H1 (cell line): ENCODE measurements at regions of chr2 and their contacts with region 1.

Region 1: DNA sequence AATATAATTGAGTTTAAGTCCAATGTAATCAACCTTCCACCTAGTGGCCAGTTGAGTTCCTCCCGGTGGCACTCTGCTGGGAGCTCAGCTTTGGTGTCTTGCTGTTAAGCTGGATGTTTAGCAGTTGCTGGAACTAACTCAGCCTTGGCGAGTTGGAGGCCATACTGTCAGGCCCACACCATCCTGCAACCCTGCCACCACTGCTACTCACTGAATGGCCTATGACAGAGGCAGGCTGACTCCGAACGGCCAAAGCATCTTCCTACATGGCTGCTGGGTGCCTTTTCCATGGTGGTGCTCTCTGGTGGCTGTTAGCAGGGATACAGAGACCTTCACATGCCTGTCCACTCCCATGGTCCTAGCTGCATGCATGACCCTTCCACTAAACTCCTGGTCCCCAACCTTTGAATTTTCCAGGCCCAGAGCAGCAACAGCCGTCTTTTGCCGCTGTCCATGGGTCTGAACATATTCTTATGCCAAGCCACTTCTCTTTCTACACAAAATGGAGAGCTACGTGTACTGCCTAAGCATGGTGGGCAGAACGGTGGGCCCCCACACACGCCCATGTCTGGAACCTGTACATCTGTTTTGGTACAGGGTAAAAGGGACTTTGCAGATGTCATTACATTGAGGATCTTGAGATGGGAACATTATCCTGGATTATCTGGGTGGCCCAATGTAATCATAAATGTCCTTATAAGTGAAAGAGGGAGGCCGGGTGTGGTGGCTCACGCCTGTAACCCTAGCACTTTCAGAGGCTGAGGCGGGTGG is 15.0 kb upstream of the TRAF3IP1 start:
- DNase-seq: no peak
- H3K4me3 ChIP-seq: no peak overlapping the region
- H3K27ac ChIP-seq: no peak overlapping the region
- H3K4me1 ChIP-seq: peaks cover 0 to 3% (median 0%) of the 10 kb centered on the region in 4 experiments; a peak in 1 of 7 replicates
- H3K27me3 ChIP-seq: 0 out of 7 replicates have a peak, but pooled peaks cover 0 to 3% (median 0%) of the 10 kb centered on the region in 4 experiments
- CTCF ChIP-seq: peak; percentile 18 to 60 (median 36)
- EP300 ChIP-seq: no peak
- POLR2A ChIP-seq: no peak
- RAD21 ChIP-seq: peak in 1 of 2 experiments; percentile 13; a peak in 1 of 4 replicates

Region 2: GRCh38 chr2:238231251-238231793 is 74.0 kb before region 1 on chr2:
- CTCF ChIA-PET with region 1: no interaction called
- POLR2A ChIA-PET with region 1: no interaction called
- DNase-seq: peak in 1 of 2 experiments; percentile 91
- H3K4me3 ChIP-seq: peak overlapping the region; percentile 47 to 71 (median 54)
- H3K27ac ChIP-seq: no peak overlapping the region
- H3K4me1 ChIP-seq: peaks cover 0 to 7% (median 5%) of the 10 kb centered on the region in 4 experiments; a peak in 5 of 7 replicates
- H3K27me3 ChIP-seq: peaks cover 6 to 38% (median 30%) of the 10 kb centered on the region in 4 experiments
- CTCF ChIP-seq: 0 out of 4 replicates have a peak, but pooled peaks of 1 of the 3 experiments have one; percentile 1
- EP300 ChIP-seq: no peak
- POLR2A ChIP-seq: no peak
- RAD21 ChIP-seq: no peak

Region 3: DNA sequence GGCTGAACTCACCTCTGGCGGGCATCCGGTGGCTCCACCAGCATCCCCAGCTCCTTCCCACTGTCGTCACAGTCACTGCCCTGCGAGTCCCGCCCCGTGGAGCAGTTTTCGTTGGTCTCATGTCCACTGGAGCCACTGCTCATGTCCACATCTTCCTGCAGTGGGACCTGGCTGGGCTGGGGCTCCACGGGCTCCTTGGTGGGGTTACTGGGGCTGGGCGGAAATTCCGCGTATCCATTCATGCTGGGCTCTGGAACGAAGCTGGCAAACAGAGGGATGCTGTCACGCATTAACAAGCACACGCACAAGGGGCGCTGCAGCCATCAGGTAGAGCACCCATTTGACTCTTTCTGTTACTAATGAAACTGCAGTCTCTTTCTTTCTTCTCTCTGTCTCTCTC is 27.6 kb before region 1 on chr2:
- CTCF ChIA-PET with region 1: interaction called, 19 read pairs
- POLR2A ChIA-PET with region 1: interaction called, 3 read pairs
- DNase-seq: peak in 1 of 2 experiments; percentile 66
- H3K4me3 ChIP-seq: no peak overlapping the region
- H3K27ac ChIP-seq: no peak overlapping the region
- H3K4me1 ChIP-seq: peaks cover 0 to 2% (median 0%) of the 10 kb centered on the region in 4 experiments; a peak in 1 of 7 replicates
- H3K27me3 ChIP-seq: no peaks in the 10 kb centered on the region
- CTCF ChIP-seq: peak; percentile 61 to 76 (median 73)
- EP300 ChIP-seq: no peak
- POLR2A ChIP-seq: no peak
- RAD21 ChIP-seq: peak; percentile 31 to 45

Region 4: GRCh38 chr2:238320246-238320647 is 15.0 kb after region 1 on chr2 and contains the start of gene TRAF3IP1:
- CTCF ChIA-PET with region 1: interaction called, 11 read pairs
- POLR2A ChIA-PET with region 1: no interaction called
- DNase-seq: peak; percentile 62 to 94
- H3K4me3 ChIP-seq: peak within 1 kb of the TSS; percentile 65 to 91 (median 66)
- H3K27ac ChIP-seq: no peak within 1 kb of the TSS
- H3K4me1 ChIP-seq: peaks cover 0 to 10% (median 0%) of the 10 kb centered on the region in 4 experiments; a peak in 2 of 7 replicates
- H3K27me3 ChIP-seq: no peaks in the 10 kb centered on the region; a peak in 1 of 7 replicates
- CTCF ChIP-seq: no peak
- EP300 ChIP-seq: no peak
- POLR2A ChIP-seq: no peak
- RAD21 ChIP-seq: no peak
- total RNA-seq, gene TRAF3IP1: 15.9 and 17.5 TPM in 2 replicates

Region 5: DNA sequence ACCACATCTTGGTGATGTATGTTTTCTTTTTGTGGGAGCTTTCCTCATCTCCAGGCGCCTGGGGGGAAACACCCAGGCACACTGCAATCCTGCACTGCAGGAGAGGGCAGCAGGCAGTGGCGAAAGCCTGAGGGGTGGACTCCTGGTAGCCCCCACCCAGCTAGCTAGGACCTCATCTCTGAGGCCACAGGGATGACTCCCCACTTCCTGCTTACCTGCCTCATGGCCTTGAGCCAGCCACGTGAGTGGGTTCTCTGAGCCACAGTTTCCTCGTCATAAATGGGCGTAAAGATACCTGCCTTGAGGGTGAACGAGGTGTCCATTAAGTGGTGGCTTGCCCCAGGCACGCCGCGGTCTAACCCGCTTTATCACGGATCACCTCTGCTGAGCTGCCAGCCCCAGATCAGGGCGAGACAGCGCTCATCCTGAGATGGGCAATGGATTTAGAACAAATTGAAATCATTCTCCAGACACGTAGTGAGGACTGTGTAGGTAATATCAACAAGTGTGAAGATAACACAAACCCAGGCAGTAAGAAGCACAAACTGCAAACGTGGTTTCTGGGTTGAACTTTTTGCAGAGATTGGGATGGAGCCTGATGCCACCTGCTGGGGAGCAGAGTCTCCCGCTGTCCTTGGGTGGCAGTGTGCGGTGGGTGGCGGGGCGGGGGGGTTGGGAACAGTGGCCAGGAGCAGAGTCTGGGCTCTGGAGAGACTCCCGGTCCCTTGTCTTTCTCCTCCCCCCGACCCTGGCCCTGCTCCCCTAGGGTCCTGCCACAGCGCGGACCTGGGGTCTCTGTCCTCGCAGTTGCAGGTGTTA is 34.3 kb after region 1 on chr2:
- CTCF ChIA-PET with region 1: interaction called, 16 read pairs
- POLR2A ChIA-PET with region 1: no interaction called
- DNase-seq: no peak
- H3K4me3 ChIP-seq: no peak overlapping the region
- H3K27ac ChIP-seq: no peak overlapping the region
- H3K4me1 ChIP-seq: 0 out of 7 replicates have a peak, but pooled peaks cover 0 to 2% (median 0%) of the 10 kb centered on the region in 4 experiments
- H3K27me3 ChIP-seq: no peaks in the 10 kb centered on the region
- CTCF ChIP-seq: no peak
- EP300 ChIP-seq: no peak
- POLR2A ChIP-seq: no peak
- RAD21 ChIP-seq: no peak